Activated CD8-positive, alpha-beta T cell treated with anti-CD3 and anti-CD28 coated beads, Interleukin-2, amount 10 ng/mL, durations not matched to agents 7 days and 5 days (primary cell): ENCODE measurements at regions of chr2 and their contacts with region 1.

Region 1: DNA sequence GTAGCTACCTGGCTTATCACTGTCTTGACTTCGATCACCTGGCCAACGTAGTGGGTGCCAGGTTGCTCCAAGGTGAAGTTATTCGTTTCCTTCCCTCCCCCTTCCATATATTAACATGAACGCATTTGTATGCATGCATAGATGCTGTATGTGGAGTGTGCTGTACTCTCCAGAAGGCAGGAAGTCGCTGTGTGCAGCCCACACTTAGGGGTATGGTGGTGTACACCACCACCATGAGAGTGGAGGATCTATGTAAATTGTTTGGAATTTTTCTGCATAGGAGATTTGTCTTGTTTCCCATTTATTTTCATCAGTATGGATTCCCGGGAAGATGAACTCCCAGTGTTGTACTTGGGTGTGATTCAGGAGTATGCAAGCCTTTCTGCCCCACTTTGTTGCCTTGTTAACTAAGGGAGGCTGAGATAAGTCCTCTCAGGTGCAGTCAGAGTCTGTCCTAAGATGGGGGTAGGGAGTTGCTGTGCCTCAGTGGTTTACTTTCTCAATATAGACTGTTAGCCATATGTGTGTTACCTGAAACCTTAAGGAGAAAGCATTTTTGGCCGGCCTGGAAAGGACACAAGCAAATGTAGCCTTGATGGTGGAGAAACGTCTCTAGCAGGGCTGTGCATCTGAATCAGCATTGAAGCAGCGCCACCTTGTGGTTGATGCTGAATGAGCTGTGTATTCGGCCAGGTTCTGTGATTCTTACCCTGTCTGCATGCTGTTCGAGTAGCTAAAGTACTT is 149.8 kb downstream of the TANC1 start:
- DNase-seq: peak; percentile 85
- ATAC-seq: peak; percentile 85
- H3K4me3 Mint-ChIP-seq: no peak overlapping the region
- H3K27ac Mint-ChIP-seq: no peak overlapping the region
- H3K4me1 Mint-ChIP-seq: peaks cover 2% of the 10 kb centered on the region
- H3K27me3 Mint-ChIP-seq: no peaks in the 10 kb centered on the region

Region 2: GRCh38 chr2:158903711-158904443 is 214.4 kb before region 1 on chr2:
- CTCF ChIA-PET with region 1: interaction called, 75 read pairs
- POLR2A ChIA-PET with region 1: no interaction called
- DNase-seq: no peak
- ATAC-seq: no peak
- H3K4me3 Mint-ChIP-seq: no peak overlapping the region
- H3K27ac Mint-ChIP-seq: no peak overlapping the region
- H3K4me1 Mint-ChIP-seq: no peaks in the 10 kb centered on the region
- H3K27me3 Mint-ChIP-seq: peaks cover 6% of the 10 kb centered on the region

Region 3: GRCh38 chr2:159035790-159036411 is 82.4 kb before region 1 on chr2:
- CTCF ChIA-PET with region 1: interaction called, 18 read pairs
- POLR2A ChIA-PET with region 1: no interaction called
- DNase-seq: peak; percentile 25
- ATAC-seq: no peak
- H3K4me3 Mint-ChIP-seq: no peak overlapping the region
- H3K27ac Mint-ChIP-seq: no peak overlapping the region
- H3K4me1 Mint-ChIP-seq: no peaks in the 10 kb centered on the region
- H3K27me3 Mint-ChIP-seq: peaks cover 6% of the 10 kb centered on the region

Region 4: GRCh38 chr2:159091976-159092375 is 26.3 kb before region 1 on chr2:
- CTCF ChIA-PET with region 1: interaction called, 10 read pairs
- POLR2A ChIA-PET with region 1: no interaction called
- DNase-seq: peak; percentile 44
- ATAC-seq: peak; percentile 69
- H3K4me3 Mint-ChIP-seq: peak overlapping the region; percentile 4
- H3K27ac Mint-ChIP-seq: peak overlapping the region; percentile 82
- H3K4me1 Mint-ChIP-seq: peaks cover 52% of the 10 kb centered on the region
- H3K27me3 Mint-ChIP-seq: no peaks in the 10 kb centered on the region

Region 5: GRCh38 chr2:159131914-159132281 is 13.6 kb after region 1 on chr2:
- CTCF ChIA-PET with region 1: interaction called, 24 read pairs
- POLR2A ChIA-PET with region 1: no interaction called
- DNase-seq: no peak
- ATAC-seq: no peak
- H3K4me3 Mint-ChIP-seq: no peak overlapping the region
- H3K27ac Mint-ChIP-seq: no peak overlapping the region
- H3K4me1 Mint-ChIP-seq: peaks cover 4% of the 10 kb centered on the region
- H3K27me3 Mint-ChIP-seq: no peaks in the 10 kb centered on the region

Region 6: DNA sequence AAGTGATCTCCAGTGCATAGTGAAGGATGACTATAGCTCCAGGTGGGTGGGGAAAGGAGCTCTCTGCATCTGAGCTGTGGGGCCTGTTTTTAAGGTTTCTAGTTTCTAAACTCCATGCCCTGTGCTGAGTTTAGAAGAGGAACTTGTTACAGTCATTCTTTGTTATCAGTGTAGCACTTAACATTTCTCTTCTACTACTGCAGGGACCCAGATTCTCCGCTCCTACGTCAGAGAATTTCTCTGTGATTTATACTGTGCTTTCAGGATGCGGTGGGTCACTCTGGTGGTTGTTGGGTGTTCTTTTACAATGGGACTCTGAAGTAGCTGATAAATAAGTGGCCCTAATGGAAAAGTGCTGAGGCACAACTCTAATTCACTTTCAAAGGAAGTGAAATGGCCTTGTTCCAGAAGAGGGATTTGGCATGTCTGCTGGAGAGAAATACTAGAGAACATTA is 46.2 kb after region 1 on chr2:
- CTCF ChIA-PET with region 1: interaction called, 12 read pairs
- POLR2A ChIA-PET with region 1: no interaction called
- DNase-seq: no peak
- ATAC-seq: no peak
- H3K4me3 Mint-ChIP-seq: no peak overlapping the region
- H3K27ac Mint-ChIP-seq: no peak overlapping the region
- H3K4me1 Mint-ChIP-seq: peaks cover 8% of the 10 kb centered on the region
- H3K27me3 Mint-ChIP-seq: no peaks in the 10 kb centered on the region